Activated CD8-positive, alpha-beta T cell treated with anti-CD3 and anti-CD28 coated beads, Interleukin-2, amount 10 ng/mL, durations not matched to agents 7 days and 5 days (primary cell): ENCODE measurements at regions of chr10 and their contacts with region 1.

Region 1: GRCh38 chr10:43138021-43138756 is at the start of gene CSGALNACT2:
- DNase-seq: peak; percentile 91
- ATAC-seq: peak; percentile 87
- H3K4me3 Mint-ChIP-seq: peak within 1 kb of the TSS; percentile 92
- H3K27ac Mint-ChIP-seq: peak within 1 kb of the TSS; percentile 96
- H3K4me1 Mint-ChIP-seq: peaks cover 56% of the 10 kb centered on the region
- H3K27me3 Mint-ChIP-seq: no peaks in the 10 kb centered on the region
- total RNA-seq, gene CSGALNACT2: 29.2 to 30.4 TPM

Region 2: GRCh38 chr10:43110338-43111086 is 27.7 kb before region 1 on chr10:
- CTCF ChIA-PET with region 1: no interaction called
- POLR2A ChIA-PET with region 1: interaction called, 11 read pairs
- DNase-seq: no peak
- ATAC-seq: no peak
- H3K4me3 Mint-ChIP-seq: no peak overlapping the region
- H3K27ac Mint-ChIP-seq: peak overlapping the region; percentile 61
- H3K4me1 Mint-ChIP-seq: peaks cover 35% of the 10 kb centered on the region
- H3K27me3 Mint-ChIP-seq: no peaks in the 10 kb centered on the region

Region 3: DNA sequence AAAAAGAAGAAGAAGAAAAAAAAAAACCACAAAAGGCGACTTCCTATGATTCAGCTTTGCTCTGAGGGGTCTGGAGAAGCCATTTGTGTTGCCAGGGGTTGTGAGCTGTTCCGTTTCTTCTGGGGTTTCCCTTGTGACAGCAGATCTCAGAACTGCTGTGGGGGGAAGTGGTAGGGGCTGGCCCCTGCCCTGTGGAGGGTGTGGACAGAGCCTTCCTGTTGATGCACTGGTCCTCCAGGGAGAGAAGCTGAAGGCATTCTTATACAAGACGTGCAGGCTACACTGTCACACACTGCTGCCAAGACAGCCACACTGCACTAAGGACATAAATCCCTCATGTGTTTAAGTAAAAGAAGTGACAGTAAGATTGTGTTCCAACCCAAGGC is 17.3 kb before region 1 on chr10:
- CTCF ChIA-PET with region 1: interaction called, 46 read pairs
- POLR2A ChIA-PET with region 1: interaction called, 155 read pairs
- DNase-seq: peak; percentile 85
- ATAC-seq: peak; percentile 88
- H3K4me3 Mint-ChIP-seq: peak overlapping the region; percentile 60
- H3K27ac Mint-ChIP-seq: peak overlapping the region; percentile 96
- H3K4me1 Mint-ChIP-seq: peaks cover 48% of the 10 kb centered on the region
- H3K27me3 Mint-ChIP-seq: no peaks in the 10 kb centered on the region

Region 4: DNA sequence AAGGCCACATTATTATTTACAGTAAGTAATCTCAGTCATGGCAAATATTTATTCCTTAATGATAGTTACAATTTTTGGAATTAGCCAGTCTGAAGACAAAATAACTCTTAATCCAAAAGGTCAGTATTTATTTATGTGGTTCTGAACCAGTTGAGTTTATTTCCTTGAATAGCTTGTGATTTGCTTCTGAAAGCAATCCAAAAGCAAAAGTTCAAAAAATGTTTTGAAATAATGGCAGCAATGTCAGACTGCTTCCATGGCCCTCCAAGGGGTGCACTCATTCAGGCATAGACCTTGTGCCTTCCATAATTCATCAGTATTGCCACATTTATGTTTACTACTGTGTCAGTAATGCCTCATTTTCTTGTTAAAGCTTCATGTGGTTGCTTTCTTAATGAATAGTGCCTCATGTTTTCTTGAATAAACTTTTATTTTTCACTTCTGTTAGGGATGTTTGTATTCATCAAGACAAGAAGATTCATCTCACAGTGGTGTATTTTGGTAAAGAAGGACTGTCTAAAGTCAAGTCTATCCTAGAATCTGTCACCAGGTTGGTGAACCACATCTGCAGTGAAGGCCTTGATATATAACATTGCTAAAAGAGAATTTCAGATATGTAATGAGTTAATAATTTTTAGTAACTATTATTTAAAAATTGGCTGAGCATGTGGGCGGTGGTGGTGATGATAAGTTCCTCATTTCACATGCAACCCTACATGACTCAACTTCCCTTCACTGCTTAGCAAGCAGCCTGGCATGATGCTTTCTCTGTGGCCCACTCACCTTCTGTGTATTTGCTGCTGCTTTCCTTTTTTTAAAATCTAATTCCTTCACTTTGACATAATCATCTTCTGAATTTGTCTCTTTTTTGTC is 22.1 kb after region 1 on chr10:
- CTCF ChIA-PET with region 1: interaction called, 7 read pairs
- POLR2A ChIA-PET with region 1: interaction called, 17 read pairs
- DNase-seq: no peak
- ATAC-seq: no peak
- H3K4me3 Mint-ChIP-seq: no peak overlapping the region
- H3K27ac Mint-ChIP-seq: peak overlapping the region; percentile 46
- H3K4me1 Mint-ChIP-seq: peaks cover 52% of the 10 kb centered on the region
- H3K27me3 Mint-ChIP-seq: no peaks in the 10 kb centered on the region

Region 5: DNA sequence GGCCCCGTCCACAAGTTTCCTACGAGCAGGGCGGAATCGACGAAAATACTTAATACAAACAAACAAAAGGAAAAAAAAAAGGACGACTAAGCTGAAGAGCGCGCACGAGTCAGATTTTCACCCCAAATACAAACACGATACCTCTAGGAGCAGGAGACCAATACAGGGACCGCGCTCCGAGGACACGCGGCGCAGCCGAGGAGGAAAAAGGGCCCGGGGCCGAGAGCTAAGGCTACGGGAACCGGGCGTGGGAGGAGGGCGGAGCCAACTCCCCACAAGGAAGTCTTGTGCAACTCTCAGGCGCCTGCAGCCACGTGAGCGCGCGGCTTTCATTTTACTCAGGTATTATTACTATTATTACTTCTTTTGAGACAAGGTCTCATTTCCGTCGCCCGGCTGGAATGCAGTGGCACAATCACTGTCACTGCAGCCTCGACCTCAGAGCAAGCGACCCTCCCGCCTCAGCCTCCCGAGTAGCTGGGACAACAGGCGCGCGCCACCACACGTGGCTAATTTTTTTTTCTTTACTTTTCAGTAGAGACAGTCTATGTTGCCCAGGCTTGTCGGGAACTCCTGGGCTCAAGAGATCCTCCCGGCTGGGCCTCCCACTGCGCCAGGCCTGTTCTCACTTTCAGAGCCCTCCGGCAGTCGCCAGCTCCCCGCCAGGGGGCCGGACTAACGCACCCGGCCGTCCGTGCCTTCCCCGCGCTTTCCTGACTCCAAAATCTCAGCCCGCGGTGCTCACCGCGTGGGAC is 269.6 kb after region 1 on chr10:
- CTCF ChIA-PET with region 1: no interaction called
- POLR2A ChIA-PET with region 1: interaction called, 11 read pairs
- DNase-seq: peak; percentile 89
- ATAC-seq: peak; percentile 42
- H3K4me3 Mint-ChIP-seq: peak overlapping the region; percentile 85
- H3K27ac Mint-ChIP-seq: peak overlapping the region; percentile 98
- H3K4me1 Mint-ChIP-seq: peaks cover 31% of the 10 kb centered on the region
- H3K27me3 Mint-ChIP-seq: no peaks in the 10 kb centered on the region

Region 6: DNA sequence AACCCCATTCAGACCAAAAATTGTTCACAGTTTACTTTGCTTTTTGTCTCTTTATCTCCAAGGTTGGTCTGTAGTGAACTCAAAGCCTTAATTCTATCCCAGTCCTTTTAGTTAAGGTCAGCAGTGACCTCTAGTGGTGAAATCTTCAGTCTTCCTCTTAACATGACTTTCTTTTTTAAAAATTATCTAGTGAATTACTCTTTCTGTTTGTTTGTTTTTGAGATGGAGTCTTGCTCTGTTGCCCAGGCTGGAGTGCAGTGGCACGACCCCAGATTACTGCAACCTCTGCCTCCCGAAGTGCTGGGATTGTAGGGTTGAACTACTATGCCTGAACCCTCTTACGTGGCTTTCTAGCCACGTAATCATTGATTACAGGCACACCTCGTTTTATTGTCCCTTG is 323.8 kb after region 1 on chr10:
- CTCF ChIA-PET with region 1: interaction called, 10 read pairs
- POLR2A ChIA-PET with region 1: no interaction called
- DNase-seq: peak; percentile 70
- ATAC-seq: peak; percentile 88
- H3K4me3 Mint-ChIP-seq: no peak overlapping the region
- H3K27ac Mint-ChIP-seq: peak overlapping the region; percentile 0
- H3K4me1 Mint-ChIP-seq: peaks cover 10% of the 10 kb centered on the region
- H3K27me3 Mint-ChIP-seq: no peaks in the 10 kb centered on the region